Calu3 (cell line): ENCODE measurements at regions of chr10 and their contacts with region 1.

Region 1: DNA sequence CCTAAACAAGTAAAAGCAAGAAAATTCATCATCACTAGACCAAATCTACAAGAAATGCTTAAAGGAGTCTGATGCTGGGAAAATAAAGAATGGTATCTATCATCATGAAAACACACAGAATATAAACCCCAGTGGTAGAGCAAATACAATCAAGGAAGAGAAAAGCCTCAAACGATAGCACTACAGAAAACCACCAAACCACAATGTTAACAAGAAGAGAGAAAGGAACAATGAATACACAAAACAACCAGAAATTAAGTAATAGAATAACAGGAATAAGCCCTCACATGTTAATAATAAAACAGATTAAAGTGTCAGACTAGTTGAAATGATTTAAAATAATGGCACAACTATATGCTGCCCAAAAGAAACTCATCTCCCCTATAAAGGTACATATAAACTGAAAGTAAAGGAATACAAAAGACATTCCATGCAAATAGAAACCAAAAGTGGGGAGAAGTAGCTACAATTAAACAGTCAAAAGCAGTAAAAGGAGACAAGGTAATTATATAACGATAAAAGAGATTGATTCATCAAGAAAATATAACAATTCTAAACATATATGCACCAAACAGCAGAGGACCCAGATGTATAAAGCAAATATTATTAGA is 77.3 kb downstream of the JMJD1C start:
- DNase-seq: no peak
- H3K4me3 Mint-ChIP-seq: peak overlapping the region; percentile 38
- H3K27ac Mint-ChIP-seq: peak overlapping the region; percentile 17
- H3K4me1 Mint-ChIP-seq: peaks cover 25% of the 10 kb centered on the region
- H3K27me3 Mint-ChIP-seq: no peaks in the 10 kb centered on the region
- CTCF ChIP-seq: no peak

Region 2: GRCh38 chr10:62980687-62981086 is 407.8 kb before region 1 on chr10:
- CTCF ChIA-PET with region 1: no interaction called
- intact Hi-C with region 1: no loop called
- DNase-seq: no peak
- H3K4me3 Mint-ChIP-seq: no peak overlapping the region
- H3K27ac Mint-ChIP-seq: no peak overlapping the region
- H3K4me1 Mint-ChIP-seq: peaks cover 7% of the 10 kb centered on the region
- H3K27me3 Mint-ChIP-seq: peaks cover 14% of the 10 kb centered on the region
- CTCF ChIP-seq: no peak

Region 3: GRCh38 chr10:63430097-63430998 is 41.8 kb after region 1 on chr10:
- CTCF ChIA-PET with region 1: no interaction called
- intact Hi-C with region 1: loop called (anchors 5 kb)
- DNase-seq: no peak
- H3K4me3 Mint-ChIP-seq: no peak overlapping the region
- H3K27ac Mint-ChIP-seq: peak overlapping the region; percentile 51
- H3K4me1 Mint-ChIP-seq: peaks cover 55% of the 10 kb centered on the region
- H3K27me3 Mint-ChIP-seq: no peaks in the 10 kb centered on the region
- CTCF ChIP-seq: no peak